Activated naive CD4-positive, alpha-beta T cell treated with anti-CD3 and anti-CD28 coated beads for 36 hours (primary cell): ENCODE measurements at regions of chr7 and their contacts with region 1.

Region 1: GRCh38 chr7:20778063-20778721 is 8.5 kb downstream of the SP8 start:
- DNase-seq: peak; percentile 14
- H3K4me3 Mint-ChIP-seq: no peak overlapping the region
- H3K27ac Mint-ChIP-seq: no peak overlapping the region
- H3K4me1 Mint-ChIP-seq: peaks cover 20% of the 10 kb centered on the region
- H3K27me3 Mint-ChIP-seq: peaks cover 75% of the 10 kb centered on the region

Region 2: DNA sequence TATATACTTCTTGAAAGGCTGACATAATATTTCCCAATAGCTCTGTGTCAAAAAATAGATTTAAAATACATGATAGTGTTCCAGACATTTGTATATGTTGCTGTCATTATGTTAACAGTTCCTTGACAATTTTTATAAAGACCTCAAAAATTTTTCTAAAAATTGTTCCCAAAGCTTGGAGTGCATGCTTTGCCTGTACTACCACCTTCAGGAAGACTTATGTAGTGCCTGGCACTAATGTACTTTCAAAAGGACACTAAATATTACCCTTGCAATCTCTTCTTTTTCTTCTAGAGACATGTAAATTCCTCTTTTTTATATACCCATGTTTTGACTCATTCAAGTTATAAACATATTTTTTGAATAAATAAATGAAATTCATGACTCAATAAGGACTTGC is 56.5 kb after region 1 on chr7:
- CTCF ChIA-PET with region 1: no interaction called
- intact Hi-C with region 1: loop called (anchors 1 kb)
- DNase-seq: no peak
- H3K4me3 Mint-ChIP-seq: no peak overlapping the region
- H3K27ac Mint-ChIP-seq: no peak overlapping the region
- H3K4me1 Mint-ChIP-seq: no peaks in the 10 kb centered on the region
- H3K27me3 Mint-ChIP-seq: peaks cover 13% of the 10 kb centered on the region